A673 (cell line): ENCODE measurements at regions of chr7 and their contacts with region 1.

Region 1: GRCh38 chr7:108805808-108806397 is 236.2 kb downstream of the DNAJB9 start:
- DNase-seq: peak; percentile 77
- H3K4me3 ChIP-seq: no peak overlapping the region
- H3K27ac ChIP-seq: no peak overlapping the region
- H3K4me1 ChIP-seq: peaks cover 4% of the 10 kb centered on the region
- H3K27me3 ChIP-seq: no peaks in the 10 kb centered on the region
- CTCF ChIP-seq: peak; percentile 85

Region 2: GRCh38 chr7:108863227-108863848 is 57.4 kb after region 1 on chr7:
- CTCF ChIA-PET with region 1: no interaction called
- POLR2A ChIA-PET with region 1: no interaction called
- intact Hi-C with region 1: no loop called
- DNase-seq: no peak
- H3K4me3 ChIP-seq: no peak overlapping the region
- H3K27ac ChIP-seq: no peak overlapping the region
- H3K4me1 ChIP-seq: peaks cover 6% of the 10 kb centered on the region
- H3K27me3 ChIP-seq: no peaks in the 10 kb centered on the region
- CTCF ChIP-seq: no peak

Region 3: DNA sequence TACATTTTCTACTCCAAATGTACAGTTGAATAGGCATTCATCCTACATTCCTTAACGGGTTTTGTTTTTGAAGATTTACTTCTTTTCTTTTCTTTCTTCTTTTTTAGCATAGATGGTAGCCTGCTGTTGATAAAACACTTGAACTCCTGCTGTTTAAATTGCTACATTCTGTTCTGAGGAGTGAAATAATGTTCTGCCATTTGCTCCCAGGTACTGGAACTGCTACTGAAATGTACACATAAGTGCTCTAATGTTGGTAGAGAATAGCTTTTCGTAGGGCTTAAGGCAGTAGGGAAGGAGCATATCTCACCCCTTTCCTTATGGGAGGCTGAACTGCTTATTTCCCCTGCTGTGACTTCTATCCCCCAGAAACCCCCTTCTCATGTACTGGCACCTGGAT is 270.7 kb after region 1 on chr7:
- CTCF ChIA-PET with region 1: no interaction called
- POLR2A ChIA-PET with region 1: no interaction called
- intact Hi-C with region 1: loop called (anchors 10 kb)
- DNase-seq: no peak
- H3K4me3 ChIP-seq: no peak overlapping the region
- H3K27ac ChIP-seq: no peak overlapping the region
- H3K4me1 ChIP-seq: no peaks in the 10 kb centered on the region
- H3K27me3 ChIP-seq: no peaks in the 10 kb centered on the region
- CTCF ChIP-seq: no peak

Region 4: DNA sequence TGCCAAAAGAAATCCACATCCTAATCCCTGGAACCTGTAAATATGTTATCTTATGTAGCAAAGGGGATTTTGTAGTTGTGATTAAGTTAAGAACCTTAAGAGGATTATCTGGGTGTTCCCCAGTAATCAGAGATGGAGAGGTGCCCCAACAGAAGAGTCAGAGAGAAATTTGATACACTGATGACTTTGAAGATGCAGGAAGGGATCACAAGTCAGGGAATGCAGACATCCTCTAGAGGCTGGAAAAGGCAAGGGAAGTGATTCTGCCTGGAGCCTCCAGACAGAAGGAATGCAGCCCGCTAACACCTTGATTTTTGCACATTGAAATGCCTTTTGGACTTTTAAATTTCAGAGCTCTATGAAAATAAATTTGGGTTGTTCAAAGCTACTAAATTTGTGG is 295.4 kb after region 1 on chr7:
- CTCF ChIA-PET with region 1: no interaction called
- POLR2A ChIA-PET with region 1: no interaction called
- intact Hi-C with region 1: no loop called
- DNase-seq: peak; percentile 6
- H3K4me3 ChIP-seq: no peak overlapping the region
- H3K27ac ChIP-seq: no peak overlapping the region
- H3K4me1 ChIP-seq: no peaks in the 10 kb centered on the region
- H3K27me3 ChIP-seq: no peaks in the 10 kb centered on the region
- CTCF ChIP-seq: no peak